CD4-positive, alpha-beta memory T cell (primary cell): ENCODE measurements at regions of chr11 and their contacts with region 1.

Region 1: DNA sequence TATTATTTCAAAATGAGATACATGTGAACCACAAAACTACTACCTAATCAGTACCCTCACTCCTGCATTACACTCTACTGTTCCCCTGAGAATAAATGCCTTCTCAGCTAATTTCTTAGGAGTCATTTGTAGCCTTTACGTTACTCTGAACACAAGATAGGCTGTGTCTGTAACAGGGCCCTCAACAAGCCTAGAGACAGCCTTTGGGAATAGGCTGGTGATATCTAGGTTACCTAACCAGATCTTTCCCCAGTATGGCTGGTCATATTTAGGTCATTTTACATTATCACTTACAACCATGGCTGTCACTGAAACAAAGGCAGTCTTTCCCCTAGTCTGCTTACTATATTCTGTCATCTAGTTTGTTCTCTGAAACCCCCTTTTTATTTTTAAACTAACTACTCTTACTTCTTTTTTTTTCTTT is 14.2 kb downstream of the ATM start:
- DNase-seq: peak in 3 of 5 donors; percentile 41 to 60 (median 55)
- H3K4me3 ChIP-seq: peak overlapping the region; percentile 11 to 42
- H3K4me3 Mint-ChIP-seq: peak overlapping the region; percentile 52 to 83 (median 80)
- H3K27ac ChIP-seq: peak overlapping the region; percentile 66
- H3K27ac Mint-ChIP-seq: peak overlapping the region; percentile 85 to 98 (median 95)
- H3K4me1 ChIP-seq: peaks cover 99% of the 10 kb centered on the region
- H3K4me1 Mint-ChIP-seq: peaks cover 58 to 89% (median 74%) of the 10 kb centered on the region in 4 donors
- H3K27me3 ChIP-seq: no peaks in the 10 kb centered on the region
- H3K27me3 Mint-ChIP-seq: no peaks in the 10 kb centered on the region

Region 2: GRCh38 chr11:108253176-108253575 is 16.1 kb after region 1 on chr11:
- CTCF ChIA-PET with region 1: interaction called, 9 read pairs
- POLR2A ChIA-PET with region 1: interaction called, 17 read pairs
- intact Hi-C with region 1: loop called (anchors 2 kb)
- DNase-seq: no peak
- H3K4me3 ChIP-seq: no peak overlapping the region
- H3K4me3 Mint-ChIP-seq: no peak overlapping the region
- H3K27ac ChIP-seq: no peak overlapping the region
- H3K27ac Mint-ChIP-seq: peak overlapping the region in 1 of 7 donors; percentile 72
- H3K4me1 ChIP-seq: peaks cover 22% of the 10 kb centered on the region
- H3K4me1 Mint-ChIP-seq: peaks cover 18 to 33% (median 23%) of the 10 kb centered on the region in 4 donors
- H3K27me3 ChIP-seq: no peaks in the 10 kb centered on the region
- H3K27me3 Mint-ChIP-seq: no peaks in the 10 kb centered on the region